B cell (primary cell): ENCODE measurements at regions of chr1 and their contacts with region 1.

Region 1: DNA sequence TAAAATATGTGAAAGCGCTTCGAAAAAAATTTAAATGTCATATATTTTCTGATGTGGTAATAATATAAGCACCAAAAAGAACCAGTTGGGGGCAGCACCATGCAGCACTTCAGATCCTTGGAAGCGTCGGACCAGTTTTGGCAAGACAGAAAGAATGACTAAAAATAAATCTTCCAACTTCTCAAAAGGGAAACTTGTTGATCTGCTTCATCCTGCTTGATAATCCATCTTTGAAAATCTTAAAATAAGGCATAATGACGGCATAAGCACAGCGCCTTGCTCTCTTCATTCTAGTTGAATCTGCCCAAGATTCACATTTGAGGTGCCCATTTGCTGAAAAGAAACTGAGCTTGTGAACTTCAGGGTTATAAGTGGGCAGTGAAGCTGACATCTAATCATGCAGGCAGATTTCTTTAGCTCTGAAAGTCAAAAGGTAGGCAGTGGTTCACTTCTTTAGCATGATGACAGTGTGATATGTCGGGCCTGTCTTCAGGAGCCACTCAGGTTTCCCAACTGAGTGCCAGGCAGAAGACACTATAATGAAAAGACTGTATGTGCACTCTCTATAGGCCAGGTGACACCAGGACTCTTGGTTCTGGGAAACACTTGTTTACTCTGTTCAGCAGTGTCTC is 19.8 kb upstream of the MUTYH start:
- DNase-seq: peak; percentile 77
- ATAC-seq: peak; percentile 67
- H3K4me3 ChIP-seq: no peak overlapping the region
- H3K4me3 Mint-ChIP-seq: peak overlapping the region; percentile 28
- H3K27ac ChIP-seq: peak overlapping the region in 1 of 2 donors; percentile 68
- H3K27ac Mint-ChIP-seq: peak overlapping the region; percentile 37
- H3K4me1 ChIP-seq: peaks cover 7 to 12% of the 10 kb centered on the region in 2 donors
- H3K4me1 Mint-ChIP-seq: peaks cover 24% of the 10 kb centered on the region
- H3K27me3 ChIP-seq: no peaks in the 10 kb centered on the region
- H3K27me3 Mint-ChIP-seq: no peaks in the 10 kb centered on the region
- CTCF ChIP-seq: peak; percentile 83

Region 2: DNA sequence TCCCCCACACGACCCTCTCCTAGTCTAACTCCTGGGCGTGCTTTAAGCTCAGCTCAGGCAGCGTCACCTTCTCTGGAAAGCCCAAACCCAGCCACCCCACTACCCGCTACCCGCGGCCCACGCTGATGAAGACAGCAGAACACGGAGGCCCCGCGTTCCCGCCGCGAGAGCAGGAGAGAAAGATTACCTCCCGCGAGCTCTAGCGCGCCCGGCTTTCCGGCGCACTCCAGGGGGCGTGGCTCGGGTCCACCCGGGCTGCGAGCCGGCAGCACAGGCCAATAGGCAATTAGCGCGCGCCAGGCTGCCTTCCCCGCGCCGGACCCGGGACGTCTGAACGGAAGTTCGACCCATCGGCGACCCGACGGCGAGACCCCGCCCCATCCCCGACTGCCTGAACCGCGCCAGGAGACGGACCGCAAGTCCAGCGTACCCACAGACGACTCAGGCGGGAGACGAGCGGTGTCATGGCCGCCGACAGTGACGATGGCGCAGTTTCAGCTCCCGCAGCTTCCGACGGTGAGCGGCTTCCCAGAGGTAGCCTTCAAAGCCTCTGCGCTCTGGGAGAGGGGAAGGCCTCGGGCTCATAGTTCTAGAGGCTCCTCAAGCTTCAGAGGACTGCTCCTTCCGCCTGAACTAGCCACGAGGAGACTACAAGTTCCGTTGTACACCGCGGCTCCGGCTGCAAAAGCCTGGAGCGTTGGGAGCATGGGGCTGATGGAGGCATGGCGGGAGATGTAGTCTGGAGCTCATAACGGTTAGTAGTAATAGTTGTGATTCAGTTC is 20.0 kb before region 1 on chr1 and contains the starts of genes MUTYH and TOE1:
- CTCF ChIA-PET with region 1: interaction called, 18 read pairs
- POLR2A ChIA-PET with region 1: interaction called, 12 read pairs
- intact Hi-C with region 1: no loop called
- DNase-seq: peak; percentile 92
- ATAC-seq: peak; percentile 88
- H3K4me3 ChIP-seq: peak within 1 kb of the TSS; percentile 83 to 97 (median 86)
- H3K4me3 Mint-ChIP-seq: peak within 1 kb of the TSS; percentile 91
- H3K27ac ChIP-seq: peak within 1 kb of the TSS; percentile 96
- H3K27ac Mint-ChIP-seq: peak within 1 kb of the TSS; percentile 100
- H3K4me1 ChIP-seq: peaks cover 20 to 33% of the 10 kb centered on the region in 2 donors
- H3K4me1 Mint-ChIP-seq: peaks cover 38% of the 10 kb centered on the region
- H3K27me3 ChIP-seq: no peaks in the 10 kb centered on the region
- H3K27me3 Mint-ChIP-seq: no peaks in the 10 kb centered on the region
- CTCF ChIP-seq: no peak
- total RNA-seq, gene MUTYH: 68.1 and 68.5 TPM in 2 replicates
- total RNA-seq, gene TOE1: 21.9 and 24.7 TPM in 2 replicates

Region 3: DNA sequence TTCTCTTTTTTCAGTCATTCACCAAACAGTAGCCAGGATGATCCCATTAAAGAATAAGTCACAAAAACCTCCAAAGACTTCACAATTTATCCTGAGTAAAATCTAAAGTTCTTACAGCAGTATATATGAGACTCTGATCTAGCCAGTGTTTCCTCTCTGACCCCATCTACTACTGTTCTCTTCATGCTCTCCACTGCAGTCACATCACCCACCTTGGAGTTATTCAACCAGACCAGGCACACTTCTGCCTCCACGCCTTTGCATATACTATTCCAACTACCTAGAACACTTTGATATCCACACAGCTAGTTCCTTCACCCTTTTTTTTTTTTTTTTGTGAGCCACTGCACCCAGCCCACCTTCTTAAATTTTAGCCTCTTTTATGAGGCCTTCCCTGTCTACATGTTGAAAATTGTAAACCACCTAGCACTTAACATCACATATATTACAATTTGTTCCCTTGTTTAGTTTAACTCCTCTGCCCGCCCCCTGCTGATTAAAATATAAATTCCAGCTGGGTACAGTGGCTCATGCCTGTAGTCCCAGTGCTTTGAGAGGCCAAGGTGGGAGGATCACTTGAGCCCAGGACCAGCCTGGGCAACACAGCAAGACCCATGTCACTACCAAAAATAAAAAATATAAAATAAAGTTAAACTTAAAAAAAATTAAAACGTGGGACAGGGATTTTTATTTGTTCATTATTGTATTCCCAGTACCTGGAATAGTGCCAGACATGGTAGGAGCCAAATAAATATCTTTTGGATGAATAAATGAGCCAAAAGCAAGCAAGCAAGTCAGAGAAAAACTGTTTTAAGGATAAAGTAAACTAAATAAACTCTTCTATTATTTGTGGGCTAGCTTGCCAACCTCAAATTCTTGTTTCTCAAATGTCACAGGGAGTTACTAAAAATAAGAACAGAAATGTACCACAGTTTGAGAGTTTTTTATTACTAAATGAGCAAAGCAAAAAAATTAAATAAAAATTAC is 15.4 kb after region 1 on chr1:
- CTCF ChIA-PET with region 1: interaction called, 34 read pairs
- POLR2A ChIA-PET with region 1: interaction called, 3 read pairs
- intact Hi-C with region 1: no loop called
- DNase-seq: no peak
- ATAC-seq: no peak
- H3K4me3 ChIP-seq: no peak overlapping the region
- H3K4me3 Mint-ChIP-seq: no peak overlapping the region
- H3K27ac ChIP-seq: peak overlapping the region in 1 of 2 donors; percentile 40
- H3K27ac Mint-ChIP-seq: peak overlapping the region; percentile 29
- H3K4me1 ChIP-seq: peaks cover 25 to 33% of the 10 kb centered on the region in 2 donors
- H3K4me1 Mint-ChIP-seq: peaks cover 38% of the 10 kb centered on the region
- H3K27me3 ChIP-seq: no peaks in the 10 kb centered on the region
- H3K27me3 Mint-ChIP-seq: no peaks in the 10 kb centered on the region
- CTCF ChIP-seq: no peak

Region 4: GRCh38 chr1:45405636-45406035 is 45.6 kb after region 1 on chr1:
- CTCF ChIA-PET with region 1: interaction called, 32 read pairs
- POLR2A ChIA-PET with region 1: no interaction called
- intact Hi-C with region 1: loop called (anchors 5 kb)
- DNase-seq: no peak
- ATAC-seq: no peak
- H3K4me3 ChIP-seq: no peak overlapping the region
- H3K4me3 Mint-ChIP-seq: no peak overlapping the region
- H3K27ac ChIP-seq: no peak overlapping the region
- H3K27ac Mint-ChIP-seq: no peak overlapping the region
- H3K4me1 ChIP-seq: peaks cover 21 to 23% of the 10 kb centered on the region in 2 donors
- H3K4me1 Mint-ChIP-seq: peaks cover 43% of the 10 kb centered on the region
- H3K27me3 ChIP-seq: no peaks in the 10 kb centered on the region
- H3K27me3 Mint-ChIP-seq: no peaks in the 10 kb centered on the region
- CTCF ChIP-seq: no peak

Region 5: GRCh38 chr1:45499415-45499769 is 139.4 kb after region 1 on chr1:
- CTCF ChIA-PET with region 1: interaction called, 478 read pairs
- POLR2A ChIA-PET with region 1: interaction called, 3 read pairs
- intact Hi-C with region 1: no loop called
- DNase-seq: no peak
- ATAC-seq: no peak
- H3K4me3 ChIP-seq: peak overlapping the region; percentile 68 to 89 (median 74)
- H3K4me3 Mint-ChIP-seq: peak overlapping the region; percentile 96
- H3K27ac ChIP-seq: peak overlapping the region; percentile 52 to 67
- H3K27ac Mint-ChIP-seq: peak overlapping the region; percentile 80
- H3K4me1 ChIP-seq: peaks cover 12 to 22% of the 10 kb centered on the region in 2 donors
- H3K4me1 Mint-ChIP-seq: peaks cover 28% of the 10 kb centered on the region
- H3K27me3 ChIP-seq: no peaks in the 10 kb centered on the region
- H3K27me3 Mint-ChIP-seq: no peaks in the 10 kb centered on the region
- CTCF ChIP-seq: no peak

Region 6: DNA sequence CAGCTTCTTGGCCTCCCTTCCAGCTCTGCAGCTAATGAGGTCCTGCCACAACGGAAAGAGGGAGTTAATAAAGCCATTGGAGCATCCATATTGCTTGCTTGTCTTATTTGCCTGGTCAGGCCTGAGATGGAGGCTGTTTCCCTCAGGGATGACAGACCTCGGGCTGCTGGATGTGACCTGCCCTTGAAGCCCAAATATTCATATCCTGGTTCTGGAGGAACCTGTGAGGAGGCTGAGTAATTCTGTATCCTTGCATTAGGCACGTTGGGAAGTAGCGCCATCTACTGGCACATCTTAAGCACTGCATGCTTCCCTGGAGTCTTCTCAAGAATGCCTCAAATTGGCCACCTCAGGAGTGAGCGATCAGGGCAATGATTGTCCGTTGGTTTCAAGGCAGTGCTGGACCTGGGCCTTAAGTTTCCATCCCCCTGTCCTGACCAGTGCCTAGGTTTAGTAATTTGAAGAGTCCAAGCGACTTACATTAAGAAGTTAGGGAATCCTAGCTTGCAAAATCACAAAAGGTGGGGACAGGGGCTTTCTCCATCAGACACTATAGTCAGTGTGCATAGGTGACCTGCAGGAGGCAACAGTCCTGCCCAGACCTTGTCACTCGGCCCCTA is 210.1 kb after region 1 on chr1:
- CTCF ChIA-PET with region 1: interaction called, 15 read pairs
- POLR2A ChIA-PET with region 1: interaction called, 3 read pairs
- intact Hi-C with region 1: loop called (anchors 1 kb)
- DNase-seq: peak; percentile 85
- ATAC-seq: peak; percentile 97
- H3K4me3 ChIP-seq: no peak overlapping the region
- H3K4me3 Mint-ChIP-seq: no peak overlapping the region
- H3K27ac ChIP-seq: peak overlapping the region in 1 of 2 donors; percentile 0
- H3K27ac Mint-ChIP-seq: peak overlapping the region; percentile 56
- H3K4me1 ChIP-seq: no peaks in the 10 kb centered on the region
- H3K4me1 Mint-ChIP-seq: peaks cover 2% of the 10 kb centered on the region
- H3K27me3 ChIP-seq: no peaks in the 10 kb centered on the region
- H3K27me3 Mint-ChIP-seq: no peaks in the 10 kb centered on the region
- CTCF ChIP-seq: peak; percentile 99